ENCODE measurements at regions of chr4 and their contacts with region 1.

Region 1: DNA sequence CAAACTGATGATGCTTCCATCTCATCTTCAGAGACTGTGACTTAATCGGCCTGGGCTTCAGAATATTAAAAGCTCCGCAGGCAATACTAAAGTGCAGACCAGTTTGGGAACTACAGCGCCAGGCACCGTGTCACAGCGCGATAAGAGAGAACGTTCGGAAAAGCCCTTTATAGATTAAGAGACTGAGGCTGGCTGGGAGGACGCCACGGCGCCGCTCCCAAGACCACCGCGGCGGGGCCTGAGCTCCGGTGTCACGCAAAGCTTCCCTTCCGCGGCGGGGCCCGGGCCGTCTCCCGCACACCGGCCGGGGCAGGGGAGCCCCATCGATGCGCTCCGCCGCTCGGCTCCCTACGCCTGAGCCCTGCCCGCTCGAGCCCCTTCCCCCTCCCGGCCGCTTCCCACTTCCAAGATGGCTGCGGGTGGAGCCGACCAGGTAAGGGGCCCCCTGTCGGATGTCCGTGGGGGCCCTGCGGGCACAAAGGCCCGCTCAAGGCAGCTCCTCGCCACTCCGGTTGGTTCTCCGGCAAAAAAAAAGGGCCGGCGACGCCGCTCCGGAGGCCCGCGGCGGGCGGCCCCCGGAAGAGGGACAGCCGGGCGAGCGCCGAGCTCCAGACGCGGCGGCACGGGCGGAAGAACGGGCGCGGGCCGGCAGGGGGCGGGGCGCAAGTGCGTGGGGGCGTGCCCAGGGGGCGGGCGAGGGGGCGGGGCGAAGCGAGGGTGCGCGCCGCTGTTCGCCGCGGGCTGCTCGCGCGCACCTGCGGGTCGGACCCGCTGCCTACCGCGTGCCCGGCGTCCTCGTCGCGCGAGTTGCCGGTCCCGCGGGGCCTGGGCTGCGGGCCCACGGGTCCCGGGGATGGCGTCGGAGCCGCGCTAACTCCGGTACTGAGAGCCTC is at the start of gene TBC1D14:
- DNase-seq: peak; percentile 92
- H3K4me3 ChIP-seq: peak within 1 kb of the TSS; percentile 79
- H3K27ac ChIP-seq: peak within 1 kb of the TSS; percentile 96 to 99
- H3K4me1 ChIP-seq: peaks cover 15% of the 10 kb centered on the region
- H3K27me3 ChIP-seq: no peaks in the 10 kb centered on the region
- CTCF ChIP-seq: peak in 2 of 3 experiments; percentile 28 to 59
- POLR2A ChIP-seq: no peak
- total RNA-seq, gene TBC1D14: 87.6 to 98.8 TPM

Region 2: GRCh38 chr4:6986781-6987587 is 77.7 kb after region 1 on chr4:
- intact Hi-C with region 1: loop called (anchors 5 kb)
- DNase-seq: peak; percentile 97
- H3K4me3 ChIP-seq: peak overlapping the region; percentile 84 to 89
- H3K27ac ChIP-seq: peak overlapping the region; percentile 90 to 95
- H3K4me1 ChIP-seq: peaks cover 48% of the 10 kb centered on the region
- H3K27me3 ChIP-seq: no peaks in the 10 kb centered on the region
- CTCF ChIP-seq: no peak
- POLR2A ChIP-seq: no peak

Measured in testis (tissue), 5 donors.